RWPE1 (cell line): ENCODE measurements at regions of chr17 and their contacts with region 1.

Region 1: GRCh38 chr17:77214743-77215142 is 74.0 kb downstream of the SEC14L1 start:
- DNase-seq: peak; percentile 19
- H3K27ac ChIP-seq: no peak overlapping the region
- CTCF ChIP-seq: peak; percentile 33

Region 2: GRCh38 chr17:76940738-76941350 is 273.9 kb before region 1 on chr17:
- CTCF ChIA-PET with region 1: no interaction called
- POLR2A ChIA-PET with region 1: no interaction called
- DNase-seq: no peak
- H3K27ac ChIP-seq: no peak overlapping the region
- CTCF ChIP-seq: no peak

Region 3: DNA sequence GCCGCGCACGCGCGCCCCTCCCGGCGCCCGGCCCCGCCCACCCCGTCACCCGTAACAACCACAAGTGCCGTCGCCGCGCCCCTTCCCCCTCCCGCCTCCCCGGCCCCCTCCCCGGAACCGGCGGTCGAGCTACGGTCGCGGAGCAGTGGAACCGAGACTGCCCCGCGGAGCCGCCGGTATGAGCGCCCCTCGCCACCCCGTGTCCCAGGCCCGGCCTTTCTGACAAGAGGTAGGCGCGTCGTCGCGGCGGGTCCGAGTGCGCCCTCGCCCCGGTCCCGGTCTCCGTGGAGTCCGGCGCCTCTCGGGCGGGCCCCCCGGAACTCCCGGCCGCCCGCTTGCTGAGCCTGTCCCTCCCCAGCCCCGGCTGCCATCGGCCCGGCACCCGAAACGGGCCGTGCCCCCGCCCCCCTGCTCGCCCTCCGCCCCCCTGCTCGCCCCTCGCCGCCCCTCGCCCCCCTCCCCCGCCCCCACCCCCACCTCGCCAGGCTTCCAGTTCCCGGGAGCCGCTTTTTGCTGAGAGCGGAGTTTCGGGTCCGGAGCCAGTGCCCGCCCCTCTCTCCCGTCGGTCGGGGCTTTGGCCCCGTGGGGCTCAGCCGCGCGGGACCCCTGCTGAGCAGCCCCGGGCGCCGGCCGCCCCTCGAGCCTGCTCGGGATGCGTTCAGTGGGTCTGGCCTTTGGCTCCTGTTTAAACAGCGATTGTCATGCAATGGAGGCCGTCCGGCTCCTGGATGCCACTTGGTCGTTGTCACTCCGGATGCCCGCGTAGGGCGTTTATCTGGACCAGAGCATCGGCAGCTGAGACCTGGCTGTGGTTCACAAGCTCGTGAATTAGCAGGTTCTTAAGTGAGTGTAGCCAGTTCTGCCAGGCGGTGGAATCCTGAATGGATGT is 73.6 kb before region 1 on chr17 and contains the start of gene SEC14L1:
- CTCF ChIA-PET with region 1: no interaction called
- POLR2A ChIA-PET with region 1: no interaction called
- DNase-seq: peak; percentile 19
- H3K27ac ChIP-seq: peak within 1 kb of the TSS; percentile 100
- CTCF ChIP-seq: no peak

Region 4: DNA sequence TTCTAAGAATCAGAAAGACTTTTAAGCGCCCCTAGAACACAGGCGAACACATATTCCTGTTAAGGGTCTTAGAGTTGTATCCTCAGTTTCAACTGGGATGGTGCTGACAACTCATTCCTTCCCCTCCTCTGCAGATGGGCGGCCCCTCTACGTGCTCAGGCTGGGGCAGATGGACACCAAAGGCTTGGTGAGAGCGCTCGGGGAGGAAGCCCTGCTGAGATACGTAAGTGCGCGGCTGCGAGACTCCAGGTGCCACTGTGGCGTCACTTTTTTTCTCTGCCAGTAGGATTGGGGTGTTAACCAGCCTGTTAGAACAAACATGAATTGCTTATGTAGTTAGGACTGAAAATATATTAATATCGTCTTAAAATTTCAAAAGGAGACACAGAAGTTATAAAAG is 11.3 kb before region 1 on chr17:
- CTCF ChIA-PET with region 1: interaction called, 13 read pairs
- POLR2A ChIA-PET with region 1: no interaction called
- DNase-seq: no peak
- H3K27ac ChIP-seq: 0 out of 2 replicates have a peak overlapping the region, but pooled peaks have one; percentile 2
- CTCF ChIP-seq: no peak

Region 5: GRCh38 chr17:77254951-77255825 is 40.4 kb after region 1 on chr17:
- CTCF ChIA-PET with region 1: no interaction called
- POLR2A ChIA-PET with region 1: no interaction called
- DNase-seq: peak; percentile 92
- H3K27ac ChIP-seq: peak overlapping the region; percentile 99
- CTCF ChIP-seq: no peak